Colonic mucosa (tissue), 4 donors: ENCODE measurements at regions of chr3 and their contacts with region 1.

Region 1: DNA sequence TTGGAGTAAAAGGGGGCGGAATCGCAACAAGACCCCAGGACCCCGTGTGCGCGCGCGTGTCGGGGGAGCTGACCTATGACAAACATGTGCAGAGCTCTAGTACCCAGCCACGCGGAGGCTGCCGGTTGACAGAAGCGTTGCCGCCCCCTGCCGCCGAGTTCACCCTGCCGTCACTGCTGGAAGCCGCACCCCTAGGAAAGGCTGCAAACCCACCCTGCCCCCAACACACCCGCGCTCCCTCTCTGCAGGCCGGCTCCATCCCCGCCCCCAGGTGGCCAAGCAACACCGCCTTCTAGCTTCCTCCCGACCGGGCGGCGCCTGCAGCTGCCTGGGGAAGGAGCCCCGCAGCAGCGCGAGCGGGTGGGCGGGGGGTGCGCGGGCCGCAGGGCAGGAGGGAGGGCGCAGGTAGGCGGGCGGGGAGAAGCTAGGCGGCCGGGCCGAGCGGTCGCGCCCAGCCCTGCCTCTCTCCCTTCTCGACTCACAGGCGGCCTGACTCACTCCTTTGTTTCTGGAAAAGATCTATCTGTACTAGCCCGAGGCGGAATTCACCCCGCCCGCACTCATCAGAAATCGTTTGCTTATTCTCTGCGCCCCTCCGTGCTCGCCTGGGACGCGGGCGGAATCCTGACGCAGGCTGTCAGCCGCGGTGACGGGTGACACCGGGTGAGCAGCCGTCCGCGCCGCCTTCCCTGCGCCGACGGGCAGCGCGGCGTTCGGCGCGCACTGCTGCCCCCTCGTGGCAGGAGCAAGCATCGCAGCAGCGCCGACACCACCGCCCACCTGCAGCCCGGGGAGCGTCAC is 160.8 kb downstream of the GAP43 start:
- DNase-seq: peak; percentile 91
- H3K4me3 ChIP-seq: peak overlapping the region; percentile 69
- H3K27ac ChIP-seq: peak overlapping the region; percentile 94
- H3K4me1 ChIP-seq: peaks cover 3% of the 10 kb centered on the region
- H3K27me3 ChIP-seq: no peaks in the 10 kb centered on the region
- CTCF ChIP-seq: peak; percentile 98

Region 2: GRCh38 chr3:115156042-115156654 is 628.0 kb before region 1 on chr3:
- intact Hi-C with region 1: loop called (anchors 10 kb)
- DNase-seq: no peak
- H3K4me3 ChIP-seq: no peak overlapping the region
- H3K27ac ChIP-seq: no peak overlapping the region
- H3K4me1 ChIP-seq: no peaks in the 10 kb centered on the region
- H3K27me3 ChIP-seq: no peaks in the 10 kb centered on the region
- CTCF ChIP-seq: no peak

Region 3: DNA sequence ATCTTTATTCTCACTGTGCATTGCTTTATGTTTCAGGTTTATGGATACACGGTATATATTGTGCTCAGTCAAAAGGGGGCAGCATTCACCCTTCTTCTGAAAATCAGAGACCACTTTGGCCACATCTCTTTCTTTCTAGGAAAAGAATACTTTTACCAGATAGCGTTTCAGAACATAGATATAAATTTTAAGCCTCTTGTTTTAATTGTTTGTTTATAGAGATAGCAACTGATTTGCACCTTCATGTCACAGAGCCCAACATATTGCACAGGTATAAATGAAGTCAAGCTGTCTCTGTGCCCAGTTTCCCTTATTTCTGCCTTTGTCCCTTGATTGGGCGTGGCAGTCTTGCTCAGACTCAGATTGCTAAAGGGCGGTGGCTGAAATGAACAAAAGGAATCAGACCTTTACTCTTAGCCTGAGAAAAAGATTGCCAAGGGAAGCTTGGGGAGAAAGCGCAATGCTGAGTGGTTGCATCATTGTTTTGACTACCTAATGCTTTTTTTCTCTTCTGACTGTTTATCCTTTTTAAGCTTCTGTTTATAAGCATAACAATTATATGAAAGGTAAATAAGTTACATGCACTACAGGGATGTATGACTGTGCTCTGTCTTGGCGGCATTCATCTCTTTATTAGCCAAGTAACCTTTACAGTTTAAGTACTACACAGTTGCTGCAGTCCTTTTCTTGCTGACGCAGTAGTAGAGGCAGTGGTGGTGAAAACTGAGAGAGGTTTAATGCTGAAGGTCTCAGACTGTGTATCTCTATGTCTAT is 566.3 kb before region 1 on chr3:
- intact Hi-C with region 1: loop called (anchors 10 kb)
- DNase-seq: peak; percentile 56
- H3K4me3 ChIP-seq: no peak overlapping the region
- H3K27ac ChIP-seq: peak overlapping the region; percentile 37
- H3K4me1 ChIP-seq: no peaks in the 10 kb centered on the region
- H3K27me3 ChIP-seq: no peaks in the 10 kb centered on the region
- CTCF ChIP-seq: peak; percentile 41

Region 4: DNA sequence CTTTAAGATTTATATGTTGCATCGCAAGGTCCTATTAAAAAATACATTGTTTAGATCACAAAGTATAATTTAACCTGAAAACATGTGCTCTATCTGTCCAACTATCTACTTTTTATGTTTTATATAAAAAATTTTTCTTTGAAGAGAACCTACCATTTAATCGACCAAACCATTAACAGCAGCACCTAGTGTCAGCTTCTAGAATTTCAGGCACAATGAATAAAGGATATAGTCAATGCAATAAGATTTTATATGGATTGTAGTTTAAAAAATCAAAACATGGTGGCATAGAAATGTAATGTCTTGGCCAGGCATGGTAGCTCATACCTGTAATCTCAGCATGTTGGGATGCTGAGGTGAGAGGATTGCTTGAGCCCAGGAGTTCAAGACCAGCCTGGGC is 152.9 kb after region 1 on chr3:
- intact Hi-C with region 1: no loop called
- DNase-seq: no peak
- H3K4me3 ChIP-seq: no peak overlapping the region
- H3K27ac ChIP-seq: no peak overlapping the region
- H3K4me1 ChIP-seq: no peaks in the 10 kb centered on the region
- H3K27me3 ChIP-seq: no peaks in the 10 kb centered on the region
- CTCF ChIP-seq: no peak